ENCODE measurements at regions of chr3 and their contacts with region 1.

Region 1: DNA sequence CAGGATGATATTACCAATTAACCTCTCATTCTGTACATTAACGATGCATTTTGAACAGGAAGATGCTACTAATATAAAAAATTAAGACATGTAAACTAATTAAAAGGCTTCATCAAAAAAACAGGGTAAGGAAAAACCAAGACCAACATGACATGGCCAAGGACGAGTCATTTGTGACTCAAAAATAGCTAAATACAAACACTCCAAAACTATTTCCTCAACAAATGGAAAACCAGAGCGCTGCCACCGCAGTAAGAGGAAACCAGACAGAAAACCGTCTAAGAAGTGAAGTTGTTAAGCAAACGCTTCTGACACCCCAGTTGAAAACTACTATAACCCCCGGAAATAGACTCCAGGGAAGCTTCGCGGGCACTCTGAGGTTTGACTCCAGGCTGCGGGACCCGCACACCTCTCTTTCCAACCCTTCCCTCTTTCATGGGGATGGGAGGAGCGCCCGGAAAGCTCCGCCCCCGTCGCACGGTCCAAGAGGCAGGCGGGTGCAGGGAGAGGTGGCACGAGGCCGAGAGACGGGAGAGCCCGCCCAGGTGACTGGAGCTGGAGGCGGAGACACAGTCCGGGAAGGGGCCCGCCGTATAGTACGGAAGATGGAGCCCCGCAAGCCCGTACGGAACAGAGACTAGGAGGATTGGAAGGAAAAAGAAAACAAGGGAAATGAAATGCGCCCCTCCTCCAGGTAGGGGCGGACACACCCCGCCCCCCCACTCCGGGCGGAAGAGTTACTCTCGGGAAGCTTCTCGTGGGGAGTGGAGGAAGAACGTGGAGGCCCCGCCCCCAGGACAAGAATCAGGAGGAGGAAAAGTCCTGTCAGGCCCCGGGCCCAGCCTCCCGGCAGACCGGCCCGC is 708 bp downstream of the DCAF1 start:
- DNase-seq: peak; percentile 91
- H3K4me3 Mint-ChIP-seq: peak overlapping the region; percentile 98
- H3K27ac Mint-ChIP-seq: peak overlapping the region; percentile 98
- H3K4me1 Mint-ChIP-seq: peaks cover 21% of the 10 kb centered on the region
- H3K27me3 Mint-ChIP-seq: no peaks in the 10 kb centered on the region

Region 2: GRCh38 chr3:51384726-51385473 is 114.2 kb before region 1 on chr3 and contains the start of gene MANF:
- CTCF ChIA-PET with region 1: interaction called, 7 read pairs
- intact Hi-C with region 1: loop called (anchors 1 kb)
- DNase-seq: peak; percentile 99
- H3K4me3 Mint-ChIP-seq: peak within 1 kb of the TSS; percentile 97
- H3K27ac Mint-ChIP-seq: peak within 1 kb of the TSS; percentile 98
- H3K4me1 Mint-ChIP-seq: peaks cover 47% of the 10 kb centered on the region
- H3K27me3 Mint-ChIP-seq: no peaks in the 10 kb centered on the region
- total RNA-seq, gene MANF: 91.7 to 108 TPM

Region 3: DNA sequence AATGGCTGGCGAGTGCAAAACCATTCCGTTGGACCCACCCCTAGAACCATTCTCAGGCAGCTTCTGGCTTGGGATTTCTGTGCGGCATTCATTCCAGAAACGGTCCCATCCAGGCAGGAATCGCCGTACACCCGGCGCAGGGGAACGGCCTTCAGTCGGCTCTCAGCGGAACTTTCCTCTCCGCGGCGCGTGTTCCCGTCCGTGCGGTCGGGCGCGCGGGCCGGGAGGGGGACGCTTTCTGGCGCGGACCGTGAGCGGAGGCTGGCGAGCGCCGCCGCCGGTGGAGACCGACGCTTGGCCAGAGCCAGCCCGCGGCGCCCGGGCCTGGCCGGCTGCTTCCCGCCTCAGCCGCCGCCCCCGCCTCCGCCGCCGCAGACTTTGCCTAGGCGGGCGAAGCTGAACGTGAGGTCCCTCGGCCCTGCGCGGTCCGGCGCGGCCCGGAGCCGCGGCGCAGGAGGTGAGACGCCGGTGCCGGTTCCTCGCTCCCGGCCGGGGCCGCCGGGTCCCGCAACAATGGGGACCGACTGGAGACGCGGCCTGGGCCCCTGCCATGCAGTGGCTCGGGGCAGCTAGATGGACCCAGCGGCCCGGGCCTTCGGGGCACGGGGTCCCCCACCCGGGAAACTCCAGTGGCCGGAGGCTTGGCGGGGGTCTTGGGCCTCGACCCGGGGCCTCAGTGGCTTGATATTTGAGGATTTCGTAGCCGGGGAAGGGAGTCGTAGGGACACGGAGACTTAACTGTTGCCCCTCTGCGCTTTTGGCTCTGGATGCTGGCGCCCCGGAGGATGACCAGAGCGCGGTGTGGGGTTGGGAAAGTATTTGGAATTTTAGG is 39.6 kb after region 1 on chr3 and contains the start of gene RAD54L2:
- CTCF ChIA-PET with region 1: interaction called, 19 read pairs
- intact Hi-C with region 1: loop called (anchors 1 kb)
- DNase-seq: peak; percentile 83
- H3K4me3 Mint-ChIP-seq: peak within 1 kb of the TSS; percentile 91
- H3K27ac Mint-ChIP-seq: peak within 1 kb of the TSS; percentile 89
- H3K4me1 Mint-ChIP-seq: peaks cover 34% of the 10 kb centered on the region
- H3K27me3 Mint-ChIP-seq: no peaks in the 10 kb centered on the region
- total RNA-seq, gene RAD54L2: 23.1 to 24.5 TPM

Region 4: GRCh38 chr3:51682079-51682478 is 183.0 kb after region 1 on chr3:
- CTCF ChIA-PET with region 1: interaction called, 136 read pairs
- intact Hi-C with region 1: loop called (anchors 1 kb)
- DNase-seq: peak; percentile 87
- H3K4me3 Mint-ChIP-seq: no peak overlapping the region
- H3K27ac Mint-ChIP-seq: peak overlapping the region; percentile 38
- H3K4me1 Mint-ChIP-seq: peaks cover 87% of the 10 kb centered on the region
- H3K27me3 Mint-ChIP-seq: no peaks in the 10 kb centered on the region

Region 5: GRCh38 chr3:51929420-51930003 is 430.4 kb after region 1 on chr3:
- CTCF ChIA-PET with region 1: no interaction called
- intact Hi-C with region 1: no loop called
- DNase-seq: no peak
- H3K4me3 Mint-ChIP-seq: no peak overlapping the region
- H3K27ac Mint-ChIP-seq: no peak overlapping the region
- H3K4me1 Mint-ChIP-seq: no peaks in the 10 kb centered on the region
- H3K27me3 Mint-ChIP-seq: no peaks in the 10 kb centered on the region

Region 6: DNA sequence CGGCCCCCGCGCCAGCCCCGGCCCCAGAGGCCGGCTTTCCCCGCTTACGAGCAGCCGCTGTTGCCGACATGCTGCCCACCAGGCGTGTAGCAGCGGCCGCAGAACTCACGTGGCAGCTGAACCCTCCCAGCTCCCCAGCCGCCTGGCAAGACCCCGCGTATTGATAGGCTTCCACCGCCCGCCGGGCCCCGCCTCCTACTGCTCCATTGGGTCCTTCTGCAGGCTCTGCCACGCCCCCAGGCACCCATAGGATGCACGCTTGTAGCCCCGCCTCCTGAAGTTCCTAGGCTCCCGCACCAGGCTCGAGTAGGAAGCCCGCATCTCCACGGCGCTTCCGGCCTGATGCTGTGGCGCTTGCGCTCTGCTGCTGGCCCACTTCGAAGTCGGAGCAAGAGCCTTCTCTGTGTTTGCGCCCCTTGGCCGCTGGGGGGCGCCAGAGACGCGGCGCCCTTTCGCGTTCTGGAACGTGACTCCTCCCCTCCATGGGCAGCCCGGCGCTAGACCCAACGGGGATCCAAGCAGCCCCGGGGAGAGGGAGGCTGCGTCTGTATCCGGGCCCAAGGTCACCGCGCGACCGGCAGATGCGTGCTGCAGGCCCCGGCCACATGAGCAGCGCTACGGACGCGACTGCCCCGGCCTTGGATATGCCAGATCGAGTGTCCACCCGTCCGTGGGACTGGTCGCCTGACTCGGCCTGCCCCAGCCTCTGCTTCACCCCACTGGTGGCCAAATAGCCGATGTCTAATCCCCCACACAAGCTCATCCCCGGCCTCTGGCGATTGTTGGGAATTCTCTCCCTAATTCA is 442.9 kb after region 1 on chr3 and contains the starts of genes PARP3 and RRP9:
- CTCF ChIA-PET with region 1: no interaction called
- intact Hi-C with region 1: loop called (anchors 5 kb)
- DNase-seq: peak; percentile 100
- H3K4me3 Mint-ChIP-seq: peak within 1 kb of the TSS; percentile 88
- H3K27ac Mint-ChIP-seq: peak within 1 kb of the TSS; percentile 82
- H3K4me1 Mint-ChIP-seq: peaks cover 33% of the 10 kb centered on the region
- H3K27me3 Mint-ChIP-seq: no peaks in the 10 kb centered on the region
- total RNA-seq, gene PARP3: 10.0 to 11.1 TPM
- total RNA-seq, gene RRP9: 24.6 to 25.0 TPM